Posterior cingulate gyrus (tissue), 11 donors: ENCODE measurements at regions of chr1 and their contacts with region 1.

Region 1: GRCh38 chr1:62823556-62823955 is 39.6 kb downstream of the ATG4C start:
- DNase-seq: no peak

Region 2: DNA sequence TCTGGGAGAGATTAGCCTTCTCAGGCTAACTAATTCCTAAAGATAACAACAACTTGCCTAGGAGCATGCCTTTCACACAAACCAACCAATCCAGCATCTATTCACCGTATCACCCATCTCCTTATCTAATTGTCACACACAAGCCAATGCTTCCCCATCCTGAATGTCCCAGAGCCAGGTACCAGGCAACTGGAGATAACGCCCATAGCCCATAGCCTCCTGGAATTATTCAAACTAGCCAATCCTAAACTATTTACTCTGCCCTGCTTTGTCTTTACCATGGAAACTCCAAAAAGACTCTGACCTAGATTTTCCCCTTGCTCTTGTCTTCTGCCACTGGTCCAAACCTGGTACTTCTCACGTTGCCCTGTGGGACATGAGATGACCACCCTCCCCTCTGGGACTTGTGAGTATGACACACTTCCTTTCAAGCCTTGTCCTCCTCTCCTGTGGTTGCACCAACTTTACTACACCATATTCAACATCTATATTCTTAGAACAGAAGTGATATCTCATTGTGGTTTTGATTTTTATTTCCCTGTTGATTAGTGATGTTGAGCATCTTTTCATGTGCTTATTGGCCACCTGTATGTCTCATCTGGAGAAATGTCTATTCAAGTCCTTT is 48.5 kb before region 1 on chr1:
- intact Hi-C with region 1: loop called (anchors 5 kb)
- DNase-seq: no peak